Posterior cingulate gyrus (tissue), 11 donors: ENCODE measurements at regions of chr1 and their contacts with region 1.

Region 1: GRCh38 chr1:205977402-205978014 is 25.7 kb downstream of the RAB7B start:
- DNase-seq: peak; percentile 59 to 97 (median 86)

Region 2: DNA sequence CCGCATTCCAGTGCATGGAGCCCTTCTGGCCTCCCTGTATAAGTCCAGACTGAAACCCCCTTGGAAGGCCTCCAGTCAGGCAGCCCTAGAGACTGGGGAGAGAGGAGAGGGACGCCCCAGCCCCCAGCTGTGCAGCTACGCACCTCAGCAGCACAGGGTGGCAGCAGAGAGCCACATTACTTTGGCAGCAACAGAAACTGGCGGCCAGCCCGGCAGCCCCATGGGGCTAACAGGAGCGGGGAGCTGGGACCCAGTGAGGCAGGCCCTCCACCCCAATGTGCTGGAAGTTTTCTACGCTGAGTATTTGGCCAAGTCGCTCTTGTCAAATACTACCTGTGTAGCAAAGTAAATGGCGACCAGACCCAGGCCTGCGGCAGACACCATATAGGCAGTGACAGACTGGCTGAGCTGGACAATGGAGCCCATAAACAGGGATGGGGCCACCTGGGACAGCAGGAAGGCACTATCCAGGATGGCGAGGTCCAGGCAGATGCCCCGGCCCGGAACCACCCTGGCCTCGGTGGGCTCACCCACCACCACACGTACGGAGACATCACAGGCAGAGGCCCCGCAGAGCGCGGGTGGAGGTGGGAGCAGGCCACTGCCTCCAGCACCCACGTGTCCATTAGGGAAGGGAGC is 318.4 kb before region 1 on chr1:
- intact Hi-C with region 1: loop called (anchors 5 kb)
- DNase-seq: peak; percentile 79 to 98 (median 90)

Region 3: DNA sequence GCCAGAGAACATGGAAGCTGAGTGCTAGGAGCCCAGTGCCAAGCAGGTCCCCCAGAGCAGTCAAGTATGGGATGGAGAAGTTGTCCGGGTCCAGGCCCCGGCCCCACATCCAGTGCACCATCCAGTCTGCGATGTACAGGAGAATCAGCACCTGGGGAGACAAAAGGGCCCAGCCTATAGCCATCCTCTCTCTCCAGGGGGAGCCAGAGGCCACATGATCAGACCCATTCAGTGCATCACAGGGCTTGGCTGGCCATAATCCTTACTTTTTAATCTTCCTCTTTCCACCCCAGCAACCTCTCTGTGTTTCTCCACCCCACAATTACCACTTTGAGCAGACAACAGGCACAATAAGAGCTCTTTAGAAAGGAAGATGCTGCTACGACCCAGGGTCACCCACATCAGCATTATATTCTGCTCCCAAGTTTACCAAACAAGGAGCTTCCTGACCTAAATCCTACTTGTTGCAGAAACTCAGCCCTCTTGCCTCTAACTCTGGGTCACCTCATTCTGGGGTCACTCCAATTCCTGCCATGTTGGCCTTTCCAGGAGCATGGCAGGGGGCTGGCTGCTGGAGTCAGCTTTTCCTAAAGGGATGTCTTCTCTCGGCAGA is 185.8 kb before region 1 on chr1:
- intact Hi-C with region 1: loop called (anchors 1 kb)
- DNase-seq: peak; percentile 42 to 95 (median 78)

Region 4: GRCh38 chr1:205919026-205919746 is 58.3 kb before region 1 on chr1:
- intact Hi-C with region 1: loop called (anchors 1 kb)
- DNase-seq: peak; percentile 72 to 97 (median 90)

Region 5: GRCh38 chr1:205933671-205934618 is 43.6 kb before region 1 on chr1:
- intact Hi-C with region 1: loop called (anchors 5 kb)
- DNase-seq: peak in 4 of 10 donors; percentile 22 to 81 (median 56)